ENCODE measurements at regions of chr10 and their contacts with region 1.

Region 1: DNA sequence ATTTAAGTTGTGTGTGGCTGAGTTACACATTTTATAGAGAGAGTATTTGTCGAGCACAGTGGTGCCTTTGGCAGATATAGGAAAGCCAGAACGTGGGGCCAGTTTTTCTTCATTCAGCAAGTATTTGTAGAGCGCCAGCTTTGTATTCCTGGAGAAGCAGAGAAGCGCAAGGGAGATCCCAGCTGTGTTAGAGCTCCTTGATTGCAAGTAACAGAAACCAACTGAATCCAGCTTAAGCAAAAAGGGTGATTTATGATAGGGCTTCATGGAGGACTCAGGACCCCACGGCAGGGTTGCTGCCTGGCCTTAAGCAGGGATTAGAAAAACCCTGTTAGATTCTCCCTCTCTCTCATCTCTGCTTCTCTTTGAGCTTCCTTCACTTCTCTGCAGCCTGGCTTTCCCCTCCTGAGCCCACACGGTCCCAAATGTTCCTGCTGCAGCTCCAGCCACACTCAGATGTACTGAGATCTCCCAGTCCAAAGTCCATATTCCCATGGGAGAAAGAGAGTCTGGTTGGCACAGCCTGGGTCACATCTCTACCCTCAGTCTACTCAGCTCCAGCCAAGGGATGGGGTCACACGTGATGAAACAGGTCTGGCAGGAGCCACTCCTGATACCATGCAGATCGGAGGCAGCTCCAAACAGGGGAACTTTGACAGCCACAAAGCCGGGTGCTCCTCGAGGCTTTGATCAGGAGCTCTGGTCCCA is 16.7 kb downstream of the UBTD1 start:
- DNase-seq: no peak
- ATAC-seq: no peak
- H3K4me3 ChIP-seq: no peak overlapping the region
- H3K27ac ChIP-seq: no peak overlapping the region
- H3K4me1 ChIP-seq: peaks cover 14% of the 10 kb centered on the region; the same call in 2 of the 3 replicates
- CTCF ChIP-seq: no peak
- EP300 ChIP-seq: no peak
- POLR2A ChIP-seq: no peak
- RAD21 ChIP-seq: no peak

Region 2: DNA sequence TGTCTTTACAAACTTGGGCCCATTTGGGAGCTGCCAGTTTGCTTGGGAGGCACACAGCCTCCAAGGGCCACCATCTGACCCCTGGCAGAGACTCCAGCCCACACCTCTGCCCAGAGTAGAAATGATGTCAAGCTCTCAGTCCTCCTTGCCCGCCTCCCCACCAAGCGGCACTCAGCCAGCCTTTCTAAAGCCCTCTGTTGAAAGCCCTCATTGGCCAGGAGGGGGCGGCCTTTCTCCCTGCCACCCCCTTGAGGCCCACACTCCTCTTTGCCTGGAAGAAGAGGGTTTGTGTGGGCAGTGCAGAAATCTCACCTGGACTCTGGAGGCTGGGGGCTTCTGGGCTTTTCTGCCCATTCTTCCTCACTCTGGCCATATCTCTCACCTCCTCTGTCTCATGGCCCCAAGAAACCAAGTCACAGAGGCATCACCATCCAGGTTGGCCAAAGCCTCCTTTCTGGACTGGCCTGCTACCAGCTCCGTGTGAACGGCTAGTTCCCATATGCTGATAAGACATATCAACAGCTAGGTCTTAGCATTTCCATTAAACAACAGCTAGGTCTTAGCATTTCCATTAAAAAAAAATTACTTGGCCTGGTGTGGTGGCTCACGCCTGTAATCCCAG is 19.4 kb after region 1 on chr10:
- CTCF ChIA-PET with region 1: interaction called, 12 read pairs
- POLR2A ChIA-PET with region 1: no interaction called
- DNase-seq: peak; percentile 61 to 67
- ATAC-seq: peak; percentile 77 to 87
- H3K4me3 ChIP-seq: no peak overlapping the region
- H3K27ac ChIP-seq: 0 out of 6 replicates have a peak overlapping the region, but pooled peaks of 1 of the 2 experiments have one; percentile 16
- H3K4me1 ChIP-seq: peaks cover 20% of the 10 kb centered on the region
- CTCF ChIP-seq: peak; percentile 59
- EP300 ChIP-seq: no peak
- POLR2A ChIP-seq: no peak
- RAD21 ChIP-seq: peak; percentile 52 to 74

Region 3: GRCh38 chr10:97911217-97911616 is 395.8 kb after region 1 on chr10:
- CTCF ChIA-PET with region 1: no interaction called
- POLR2A ChIA-PET with region 1: no interaction called
- DNase-seq: no peak
- ATAC-seq: no peak
- H3K4me3 ChIP-seq: no peak overlapping the region
- H3K27ac ChIP-seq: no peak overlapping the region
- H3K4me1 ChIP-seq: 0 out of 3 replicates have a peak, but pooled peaks cover 2% of the 10 kb centered on the region
- CTCF ChIP-seq: no peak
- EP300 ChIP-seq: no peak
- POLR2A ChIP-seq: no peak
- RAD21 ChIP-seq: no peak